Adrenal gland (tissue), 19 donors: ENCODE measurements at regions of chr12 and their contacts with region 1.

Region 1: GRCh38 chr12:93569656-93570551 is 2.6 kb upstream of the SOCS2 start:
- DNase-seq: peak; percentile 89 to 95 (median 93)
- H3K4me3 ChIP-seq: peak overlapping the region; percentile 52 to 88 (median 76)
- H3K27ac ChIP-seq: peak overlapping the region; percentile 86 to 97 (median 95)
- H3K4me1 ChIP-seq: peaks cover 0 to 16% of the 10 kb centered on the region in 2 donors
- H3K27me3 ChIP-seq: no peaks in the 10 kb centered on the region
- CTCF ChIP-seq: peak; percentile 59 to 76 (median 67)
- POLR2A ChIP-seq: no peak

Region 2: GRCh38 chr12:93502802-93503623 is 66.9 kb before region 1 on chr12:
- intact Hi-C with region 1: loop called in 1 of 2 experiments (anchors 5 kb)
- DNase-seq: peak in 6 of 7 donors; percentile 28 to 75 (median 60)
- H3K4me3 ChIP-seq: no peak overlapping the region
- H3K27ac ChIP-seq: no peak overlapping the region
- H3K4me1 ChIP-seq: no peaks in the 10 kb centered on the region
- H3K27me3 ChIP-seq: no peaks in the 10 kb centered on the region
- CTCF ChIP-seq: peak; percentile 71 to 88 (median 76)
- POLR2A ChIP-seq: no peak

Region 3: DNA sequence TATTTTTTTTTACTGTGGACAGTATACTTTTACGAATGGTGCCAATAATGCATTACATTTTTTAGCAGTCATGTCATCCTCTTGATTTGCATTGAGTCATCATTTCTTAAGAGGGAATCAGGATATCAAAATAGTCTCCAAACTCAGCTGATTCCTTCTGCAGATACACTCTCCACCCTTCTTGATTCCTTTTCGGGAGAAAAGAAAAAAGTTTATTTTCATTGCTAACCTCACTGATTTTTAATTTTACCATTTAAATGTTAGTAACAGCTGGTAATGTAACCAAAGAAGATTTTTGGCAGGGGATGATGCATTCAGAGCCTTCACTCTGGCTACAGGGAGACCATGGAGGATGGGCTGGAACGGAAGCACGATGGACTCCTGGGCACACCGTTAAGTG is 55.1 kb before region 1 on chr12:
- intact Hi-C with region 1: no loop called
- DNase-seq: no peak
- H3K4me3 ChIP-seq: no peak overlapping the region
- H3K27ac ChIP-seq: no peak overlapping the region
- H3K4me1 ChIP-seq: peaks cover 7 to 8% of the 10 kb centered on the region in 2 donors
- H3K27me3 ChIP-seq: no peaks in the 10 kb centered on the region
- CTCF ChIP-seq: no peak
- POLR2A ChIP-seq: no peak

Region 4: GRCh38 chr12:93742110-93742934 is 172.4 kb after region 1 on chr12:
- intact Hi-C with region 1: loop called (anchors 5 to 10 kb)
- DNase-seq: peak; percentile 75 to 87 (median 80)
- H3K4me3 ChIP-seq: peak overlapping the region in 3 of 4 donors; percentile 46 to 87 (median 54)
- H3K27ac ChIP-seq: peak overlapping the region; percentile 58 to 95 (median 89)
- H3K4me1 ChIP-seq: peaks cover 7 to 36% of the 10 kb centered on the region in 2 donors
- H3K27me3 ChIP-seq: no peaks in the 10 kb centered on the region
- CTCF ChIP-seq: peak in 5 of 6 experiments; percentile 24 to 57 (median 38)
- POLR2A ChIP-seq: peak in 1 of 2 donors; percentile 58

Region 5: GRCh38 chr12:94101738-94102660 is 532.1 kb after region 1 on chr12:
- intact Hi-C with region 1: loop called (anchors 5 to 10 kb)
- DNase-seq: peak; percentile 82 to 96 (median 90)
- H3K4me3 ChIP-seq: peak overlapping the region in 3 of 4 donors; percentile 35 to 66 (median 36)
- H3K27ac ChIP-seq: peak overlapping the region in 3 of 5 donors; percentile 15 to 30 (median 18)
- H3K4me1 ChIP-seq: peaks cover 6 to 20% of the 10 kb centered on the region in 2 donors
- H3K27me3 ChIP-seq: no peaks in the 10 kb centered on the region
- CTCF ChIP-seq: peak; percentile 63 to 90 (median 76)
- POLR2A ChIP-seq: no peak